Brain microvascular endothelial cell (primary cell): ENCODE measurements at regions of chr2 and their contacts with region 1.

Region 1: DNA sequence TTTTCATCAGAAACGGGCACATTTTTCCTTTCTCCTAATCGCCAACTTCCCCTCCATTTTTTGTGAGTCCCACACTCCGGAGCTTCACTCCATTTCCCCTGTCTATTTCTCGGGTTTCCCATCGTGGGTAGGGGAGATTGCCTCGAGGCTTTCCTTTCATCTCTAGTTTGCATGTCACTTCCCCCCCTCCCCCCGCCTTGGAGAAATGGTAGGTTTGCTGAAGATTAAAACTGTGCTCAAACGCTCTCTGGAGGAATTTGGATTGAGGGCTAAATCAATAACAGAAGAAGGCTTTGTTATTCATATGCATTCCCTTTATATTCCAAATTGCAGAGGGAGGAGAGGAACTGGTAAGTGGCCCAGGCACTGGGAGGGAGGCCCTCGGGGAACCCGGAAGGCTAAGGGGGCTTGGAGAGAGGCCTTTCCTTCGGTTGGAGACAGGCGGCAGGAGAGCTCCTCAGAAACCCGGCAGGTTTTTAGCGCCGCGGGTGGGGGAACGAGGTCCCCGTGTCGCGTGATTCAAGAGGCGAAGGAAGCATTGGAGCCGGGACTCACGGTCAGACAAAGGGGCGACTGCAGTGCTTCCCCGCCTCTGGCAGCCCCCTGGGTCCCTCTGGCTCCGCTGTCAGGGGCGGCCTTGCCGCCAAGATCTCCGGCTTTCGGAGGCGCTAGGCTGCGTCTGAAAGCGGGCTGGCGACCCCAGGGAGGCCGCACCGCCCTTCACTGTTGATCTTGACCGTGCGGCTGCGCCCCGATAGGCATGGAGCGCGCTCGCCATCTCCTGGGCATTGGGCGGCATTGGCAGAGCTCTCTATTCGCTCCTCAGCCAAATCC is 2.4 kb upstream of the HOXD12 start:
- DNase-seq: peak; percentile 45
- H3K4me3 ChIP-seq: no peak overlapping the region
- H3K27ac ChIP-seq: no peak overlapping the region
- H3K27me3 ChIP-seq: peaks cover 99% of the 10 kb centered on the region
- CTCF ChIP-seq: peak; percentile 87

Region 2: DNA sequence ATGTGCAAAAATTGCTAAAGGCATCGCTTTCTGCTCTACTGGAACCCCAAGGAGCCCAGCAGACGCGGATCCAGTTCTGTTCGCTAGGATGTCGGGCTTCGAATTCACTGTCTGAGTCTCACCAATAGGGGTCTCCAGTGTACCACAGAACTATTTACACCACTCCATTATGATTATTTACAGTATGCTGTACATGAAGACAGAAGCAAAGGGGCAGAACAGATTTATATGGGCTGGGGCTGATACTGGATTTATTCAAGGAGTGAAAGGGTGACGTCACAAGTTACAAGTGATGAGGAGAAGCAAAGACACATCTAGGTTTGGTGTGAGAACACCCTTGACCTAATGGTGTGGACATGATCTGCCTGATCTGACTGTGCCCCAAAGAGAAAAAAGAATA is 730.4 kb before region 1 on chr2:
- in situ Hi-C with region 1: loop called (anchors 10 kb)
- DNase-seq: peak; percentile 59
- H3K4me3 ChIP-seq: no peak overlapping the region
- H3K27ac ChIP-seq: no peak overlapping the region
- H3K27me3 ChIP-seq: no peaks in the 10 kb centered on the region
- CTCF ChIP-seq: peak; percentile 85

Region 3: GRCh38 chr2:176380341-176380740 is 283.1 kb after region 1 on chr2:
- in situ Hi-C with region 1: no loop called
- DNase-seq: no peak
- H3K4me3 ChIP-seq: no peak overlapping the region
- H3K27ac ChIP-seq: no peak overlapping the region
- H3K27me3 ChIP-seq: no peaks in the 10 kb centered on the region
- CTCF ChIP-seq: no peak